Calu3 (cell line): ENCODE measurements at regions of chr3 and their contacts with region 1.

Region 1: GRCh38 chr3:119930286-119930685 is 148.4 kb downstream of the NR1I2 start:
- DNase-seq: no peak
- H3K4me3 Mint-ChIP-seq: no peak overlapping the region
- H3K27ac Mint-ChIP-seq: no peak overlapping the region
- H3K4me1 Mint-ChIP-seq: no peaks in the 10 kb centered on the region
- H3K27me3 Mint-ChIP-seq: no peaks in the 10 kb centered on the region
- CTCF ChIP-seq: no peak

Region 2: DNA sequence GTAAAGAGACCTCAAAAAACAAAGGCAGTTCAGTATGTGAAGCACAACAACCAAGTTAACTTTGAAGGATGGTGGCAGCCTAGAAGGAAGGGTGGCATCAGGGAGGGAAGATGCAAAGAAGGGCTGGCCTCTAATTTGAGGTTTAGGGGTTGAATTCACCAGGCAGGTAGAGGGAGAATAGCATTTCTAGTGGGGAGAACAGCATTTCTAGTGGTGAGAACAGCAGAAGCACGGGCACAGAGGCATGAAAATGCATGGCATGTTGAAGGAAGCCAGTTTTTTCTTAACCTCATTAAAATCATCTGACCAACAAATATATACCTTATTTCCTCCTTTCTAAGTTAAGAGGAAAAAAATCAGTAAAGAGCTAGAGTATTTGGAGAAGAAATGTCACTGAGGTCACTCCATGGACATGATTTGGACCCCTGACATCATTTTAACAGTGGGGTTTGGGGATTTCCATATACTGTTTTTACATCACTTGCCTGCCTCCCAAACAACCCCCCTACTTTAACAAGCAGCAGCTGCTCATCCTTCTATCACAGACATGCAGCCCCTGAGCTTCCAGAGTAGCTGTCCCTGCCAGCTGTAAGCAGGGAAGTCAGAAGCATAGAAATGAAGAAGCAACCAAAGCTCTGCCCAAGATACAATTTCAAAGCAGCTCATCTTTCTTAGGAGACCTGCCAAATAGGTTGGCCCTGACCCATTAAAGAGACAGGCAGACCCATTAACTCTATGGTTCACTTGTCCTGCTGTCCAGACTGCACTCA is 267.5 kb before region 1 on chr3:
- CTCF ChIA-PET with region 1: interaction called, 10 read pairs
- intact Hi-C with region 1: no loop called
- DNase-seq: no peak
- H3K4me3 Mint-ChIP-seq: no peak overlapping the region
- H3K27ac Mint-ChIP-seq: no peak overlapping the region
- H3K4me1 Mint-ChIP-seq: no peaks in the 10 kb centered on the region
- H3K27me3 Mint-ChIP-seq: no peaks in the 10 kb centered on the region
- CTCF ChIP-seq: no peak

Region 3: GRCh38 chr3:119912220-119912619 is 18.1 kb before region 1 on chr3:
- CTCF ChIA-PET with region 1: no interaction called
- intact Hi-C with region 1: no loop called
- DNase-seq: no peak
- H3K4me3 Mint-ChIP-seq: no peak overlapping the region
- H3K27ac Mint-ChIP-seq: no peak overlapping the region
- H3K4me1 Mint-ChIP-seq: no peaks in the 10 kb centered on the region
- H3K27me3 Mint-ChIP-seq: no peaks in the 10 kb centered on the region
- CTCF ChIP-seq: no peak

Region 4: GRCh38 chr3:120039642-120040610 is 109.6 kb after region 1 on chr3:
- CTCF ChIA-PET with region 1: no interaction called
- intact Hi-C with region 1: no loop called
- DNase-seq: no peak
- H3K4me3 Mint-ChIP-seq: no peak overlapping the region
- H3K27ac Mint-ChIP-seq: no peak overlapping the region
- H3K4me1 Mint-ChIP-seq: no peaks in the 10 kb centered on the region
- H3K27me3 Mint-ChIP-seq: no peaks in the 10 kb centered on the region
- CTCF ChIP-seq: no peak